ENCODE measurements at regions of chr11 and their contacts with region 1.

Region 1: GRCh38 chr11:58579192-58580129 is 598 bp downstream of the ZFP91 start:
- DNase-seq: peak; percentile 92 to 94
- H3K4me3 ChIP-seq: peak overlapping the region; percentile 78
- H3K4me3 Mint-ChIP-seq: peak overlapping the region; percentile 99
- H3K27ac Mint-ChIP-seq: peak overlapping the region; percentile 99
- H3K4me1 ChIP-seq: peaks cover 2% of the 10 kb centered on the region; the same call in 1 of the 2 replicates
- H3K4me1 Mint-ChIP-seq: no peaks in the 10 kb centered on the region
- H3K27me3 ChIP-seq: no peaks in the 10 kb centered on the region
- H3K27me3 Mint-ChIP-seq: no peaks in the 10 kb centered on the region
- CTCF ChIP-seq: peak; percentile 83 to 89

Region 2: DNA sequence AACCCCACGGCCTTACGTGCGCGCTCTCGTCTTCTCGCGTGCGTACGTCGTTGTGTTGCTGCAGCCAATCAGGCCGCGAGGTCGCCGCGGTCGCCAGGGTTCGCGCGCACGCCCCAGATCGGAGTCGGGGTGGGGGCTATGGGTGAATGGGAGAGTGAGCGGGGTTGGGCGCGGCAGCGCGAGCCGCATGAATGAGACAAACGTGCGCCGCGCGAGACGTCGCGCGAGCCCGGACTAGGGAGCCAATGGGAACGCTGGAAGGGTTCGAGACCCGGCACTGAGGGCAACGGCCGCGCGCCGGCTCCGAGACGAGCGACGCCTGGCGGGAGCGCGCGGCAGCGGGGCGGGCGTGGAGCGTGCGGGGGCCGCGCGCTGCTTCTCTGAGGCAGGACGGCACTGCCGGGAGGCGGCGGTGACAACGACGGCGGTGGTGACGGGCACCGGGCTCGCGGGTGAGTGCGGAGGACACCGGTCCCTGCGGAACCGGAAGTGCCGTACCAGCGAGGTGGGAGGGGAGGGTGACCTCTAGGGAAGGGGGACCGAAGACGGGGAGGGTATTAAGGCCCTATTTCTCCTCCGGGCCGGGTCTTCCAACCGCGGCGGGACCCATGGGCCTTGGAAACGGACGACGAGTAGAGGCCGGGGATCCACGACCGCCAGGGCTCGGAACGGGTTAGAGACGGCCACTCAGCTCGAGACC is 911.6 kb before region 1 on chr11 and contains the start of gene ZDHHC5:
- CTCF ChIA-PET with region 1: no interaction called
- POLR2A ChIA-PET with region 1: no interaction called
- intact Hi-C with region 1: loop called (anchors 1 kb)
- DNase-seq: peak; percentile 100
- H3K4me3 ChIP-seq: peak within 1 kb of the TSS; percentile 74
- H3K4me3 Mint-ChIP-seq: peak within 1 kb of the TSS; percentile 99
- H3K27ac Mint-ChIP-seq: peak within 1 kb of the TSS; percentile 100
- H3K4me1 ChIP-seq: peaks cover 14% of the 10 kb centered on the region; the same call in 1 of the 2 replicates
- H3K4me1 Mint-ChIP-seq: peaks cover 12% of the 10 kb centered on the region
- H3K27me3 ChIP-seq: no peaks in the 10 kb centered on the region
- H3K27me3 Mint-ChIP-seq: no peaks in the 10 kb centered on the region
- CTCF ChIP-seq: peak; percentile 4 to 46
- total RNA-seq, gene ZDHHC5: 66.0 and 72.2 TPM in 2 replicates

Region 3: GRCh38 chr11:58567889-58568512 is 11.5 kb before region 1 on chr11:
- CTCF ChIA-PET with region 1: interaction called, 10 read pairs
- POLR2A ChIA-PET with region 1: no interaction called
- intact Hi-C with region 1: no loop called
- DNase-seq: peak; percentile 68 to 73
- H3K4me3 ChIP-seq: no peak overlapping the region
- H3K4me3 Mint-ChIP-seq: no peak overlapping the region
- H3K27ac Mint-ChIP-seq: no peak overlapping the region
- H3K4me1 ChIP-seq: no peaks in the 10 kb centered on the region
- H3K4me1 Mint-ChIP-seq: no peaks in the 10 kb centered on the region
- H3K27me3 ChIP-seq: no peaks in the 10 kb centered on the region
- H3K27me3 Mint-ChIP-seq: no peaks in the 10 kb centered on the region
- CTCF ChIP-seq: peak; percentile 86 to 95

Region 4: GRCh38 chr11:58629857-58630256 is 50.4 kb after region 1 on chr11:
- CTCF ChIA-PET with region 1: interaction called, 11 read pairs
- POLR2A ChIA-PET with region 1: no interaction called
- intact Hi-C with region 1: loop called (anchors 1 kb)
- DNase-seq: peak in 1 of 2 experiments; percentile 43
- H3K4me3 ChIP-seq: no peak overlapping the region
- H3K4me3 Mint-ChIP-seq: no peak overlapping the region
- H3K27ac Mint-ChIP-seq: no peak overlapping the region
- H3K4me1 ChIP-seq: no peaks in the 10 kb centered on the region
- H3K4me1 Mint-ChIP-seq: no peaks in the 10 kb centered on the region
- H3K27me3 ChIP-seq: no peaks in the 10 kb centered on the region
- H3K27me3 Mint-ChIP-seq: no peaks in the 10 kb centered on the region
- CTCF ChIP-seq: peak; percentile 37 to 59

Region 5: GRCh38 chr11:58762284-58763119 is 183.0 kb after region 1 on chr11:
- CTCF ChIA-PET with region 1: no interaction called
- POLR2A ChIA-PET with region 1: no interaction called
- intact Hi-C with region 1: loop called (anchors 1 kb)
- DNase-seq: peak; percentile 65 to 82
- H3K4me3 ChIP-seq: no peak overlapping the region
- H3K4me3 Mint-ChIP-seq: peak overlapping the region; percentile 47
- H3K27ac Mint-ChIP-seq: peak overlapping the region; percentile 50
- H3K4me1 ChIP-seq: peaks cover 16% of the 10 kb centered on the region
- H3K4me1 Mint-ChIP-seq: peaks cover 13% of the 10 kb centered on the region
- H3K27me3 ChIP-seq: no peaks in the 10 kb centered on the region
- H3K27me3 Mint-ChIP-seq: no peaks in the 10 kb centered on the region
- CTCF ChIP-seq: no peak

Region 6: DNA sequence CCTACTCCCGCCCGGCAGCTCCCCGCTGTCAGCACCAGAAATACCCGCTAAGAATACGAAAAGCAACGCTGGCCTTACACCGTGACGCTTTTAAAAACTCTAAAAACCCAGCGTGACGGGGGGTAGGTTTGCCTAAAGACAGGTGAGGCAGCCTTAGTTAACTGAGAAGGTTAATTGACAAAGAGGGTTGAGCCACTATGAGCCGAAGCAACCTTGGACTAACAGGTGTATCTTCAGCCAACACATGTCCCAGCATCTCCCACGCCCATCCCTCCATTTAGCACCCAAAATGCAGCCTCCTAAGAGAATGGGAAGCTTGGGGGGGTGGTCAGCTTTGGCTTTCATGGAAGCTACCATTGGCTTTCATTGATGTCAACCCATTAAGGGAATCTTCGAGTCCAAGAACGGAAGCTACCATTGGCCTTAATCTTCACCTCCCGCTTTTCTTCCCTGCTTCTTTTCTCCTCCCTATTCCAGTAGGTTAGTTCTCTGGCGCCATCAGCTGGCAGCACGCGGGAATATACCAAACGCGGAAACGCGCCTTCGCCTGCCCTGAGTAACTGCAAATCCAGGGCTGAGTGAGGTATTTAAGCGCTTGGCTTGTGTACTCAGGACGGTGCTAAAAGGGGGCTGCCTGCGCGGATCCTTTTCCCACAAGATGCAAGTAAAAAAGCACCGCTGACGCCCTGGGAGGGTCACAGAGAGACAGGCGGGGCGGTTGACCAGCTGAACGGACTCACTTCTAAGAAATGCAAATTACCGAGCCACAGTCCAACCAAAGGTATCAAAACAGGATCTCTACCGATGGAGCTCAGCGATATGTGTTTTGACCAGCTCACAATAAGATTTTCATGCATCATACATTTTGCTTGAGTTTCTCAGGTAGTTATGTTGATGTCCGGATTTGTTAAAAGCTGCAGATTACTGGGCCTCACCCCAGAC is 321.3 kb after region 1 on chr11:
- CTCF ChIA-PET with region 1: interaction called, 5 read pairs
- POLR2A ChIA-PET with region 1: no interaction called
- intact Hi-C with region 1: loop called (anchors 2 kb)
- DNase-seq: peak; percentile 90
- H3K4me3 ChIP-seq: no peak overlapping the region
- H3K4me3 Mint-ChIP-seq: peak overlapping the region; percentile 41
- H3K27ac Mint-ChIP-seq: no peak overlapping the region
- H3K4me1 ChIP-seq: no peaks in the 10 kb centered on the region
- H3K4me1 Mint-ChIP-seq: no peaks in the 10 kb centered on the region
- H3K27me3 ChIP-seq: no peaks in the 10 kb centered on the region
- H3K27me3 Mint-ChIP-seq: no peaks in the 10 kb centered on the region
- CTCF ChIP-seq: peak; percentile 63 to 75

Region 7: GRCh38 chr11:59142530-59143507 is 563.4 kb after region 1 on chr11 and contains the start of gene FAM111A:
- CTCF ChIA-PET with region 1: no interaction called
- POLR2A ChIA-PET with region 1: no interaction called
- intact Hi-C with region 1: loop called (anchors 2 kb)
- DNase-seq: peak; percentile 92 to 95
- H3K4me3 ChIP-seq: peak within 1 kb of the TSS; percentile 55
- H3K4me3 Mint-ChIP-seq: peak within 1 kb of the TSS; percentile 98
- H3K27ac Mint-ChIP-seq: peak within 1 kb of the TSS; percentile 94
- H3K4me1 ChIP-seq: peaks cover 21% of the 10 kb centered on the region
- H3K4me1 Mint-ChIP-seq: peaks cover 45% of the 10 kb centered on the region
- H3K27me3 ChIP-seq: no peaks in the 10 kb centered on the region
- H3K27me3 Mint-ChIP-seq: no peaks in the 10 kb centered on the region
- CTCF ChIP-seq: peak in 1 of 2 experiments; percentile 75
- total RNA-seq, gene FAM111A: 76.1 and 78.8 TPM in 2 replicates

Measured in Caco-2 (cell line).